Aorta (tissue), 5 donors: ENCODE measurements at regions of chr3 and their contacts with region 1.

Region 1: DNA sequence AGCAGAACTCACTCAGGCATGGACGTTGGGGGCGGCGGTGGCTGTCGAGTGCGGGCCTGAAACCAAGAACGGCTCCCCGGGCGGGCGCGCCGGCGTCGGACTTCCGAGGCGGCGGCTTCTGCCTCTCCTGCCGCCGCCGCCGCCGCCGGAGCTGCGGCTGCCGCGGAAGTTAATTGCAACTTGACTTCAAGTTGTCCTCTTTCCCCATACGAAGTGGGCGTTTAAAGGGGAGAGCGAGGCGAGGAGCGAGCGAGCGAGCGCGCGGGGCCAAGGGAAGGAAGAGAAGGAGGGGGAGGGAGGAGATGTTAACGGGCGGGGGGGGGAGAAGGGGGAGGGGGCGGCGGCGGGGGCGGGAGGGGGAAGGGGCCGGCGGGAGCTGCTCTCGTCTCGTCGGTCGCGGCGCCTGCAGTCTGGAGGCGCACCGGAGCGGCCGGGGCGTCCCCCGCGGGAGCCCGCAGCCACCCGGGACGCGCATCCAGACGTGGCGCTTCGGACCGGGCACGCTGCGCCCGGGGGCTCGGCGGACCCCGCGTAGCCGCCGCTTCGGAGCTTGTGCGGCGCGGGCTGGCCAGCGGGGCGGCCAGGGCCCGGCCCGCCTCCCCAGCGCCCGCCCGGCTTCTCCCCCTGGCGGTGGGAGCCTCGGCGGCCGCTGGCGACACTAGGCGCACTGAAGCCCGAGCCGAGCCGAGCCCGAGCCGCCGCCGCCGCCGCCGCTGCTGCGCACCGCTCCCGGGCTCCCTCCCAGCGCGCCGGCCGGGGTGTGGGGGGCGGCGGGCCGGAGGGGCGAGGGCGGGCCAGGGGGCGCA is 19.7 kb upstream of the SATB1 start:
- DNase-seq: peak; percentile 80 to 91
- ATAC-seq: peak; percentile 91
- H3K4me3 ChIP-seq: peak overlapping the region; percentile 42 to 94
- H3K27ac ChIP-seq: no peak overlapping the region
- H3K4me1 ChIP-seq: no peaks in the 10 kb centered on the region
- H3K27me3 ChIP-seq: peaks cover 0 to 1% of the 10 kb centered on the region in 2 donors

Region 2: DNA sequence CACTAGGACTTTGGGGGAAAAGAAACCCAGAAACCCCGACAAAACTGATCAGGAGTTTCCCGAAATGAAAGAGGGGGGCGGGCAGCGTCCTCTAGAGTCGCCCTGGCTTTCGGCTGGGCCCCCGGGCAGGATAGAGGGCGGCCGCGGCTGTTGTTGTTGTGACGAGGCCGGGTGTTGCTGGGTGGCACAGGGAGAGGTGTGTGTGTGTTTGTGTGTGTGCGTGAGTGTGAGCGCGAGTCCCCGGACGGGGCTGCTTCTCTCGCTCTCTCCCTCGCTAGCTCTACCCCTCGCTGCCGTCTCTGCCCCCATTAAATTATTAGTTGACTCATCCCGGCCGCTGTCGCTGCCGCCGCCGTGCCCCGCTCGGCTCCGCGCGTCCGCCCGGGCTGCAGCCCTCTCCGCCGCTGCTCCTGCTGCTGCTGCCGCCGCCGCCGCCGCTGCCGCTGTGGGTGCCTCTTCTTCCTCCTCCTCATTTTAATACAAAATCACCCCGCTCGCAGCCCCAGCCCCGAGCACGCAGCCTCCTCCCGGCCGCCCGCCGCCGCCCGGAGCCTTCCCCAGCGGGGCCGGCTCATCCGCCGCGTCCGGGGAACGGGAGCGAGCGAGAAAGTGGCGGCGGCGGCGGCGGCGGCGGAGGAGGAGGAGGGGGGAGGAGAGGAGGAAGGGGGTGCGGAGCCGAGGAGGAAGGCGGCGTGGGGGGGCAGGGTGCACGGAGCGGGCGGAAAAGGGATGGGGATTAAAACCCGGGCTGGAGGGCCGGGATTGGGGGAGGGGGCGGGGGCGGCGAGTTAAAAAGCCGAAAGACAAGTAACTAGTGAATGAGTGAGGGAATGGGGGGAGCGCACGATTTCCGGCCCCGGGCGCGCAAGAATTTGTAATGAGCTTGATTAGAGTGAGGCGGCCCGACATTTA is 19.8 kb before region 1 on chr3 and contains the start of gene SATB1:
- intact Hi-C with region 1: loop called (anchors 2 kb)
- DNase-seq: peak; percentile 90 to 96
- ATAC-seq: peak; percentile 86
- H3K4me3 ChIP-seq: peak within 1 kb of the TSS; percentile 94
- H3K27ac ChIP-seq: peak within 1 kb of the TSS in 1 of 2 donors; percentile 69
- H3K4me1 ChIP-seq: peaks cover 0 to 2% of the 10 kb centered on the region in 2 donors
- H3K27me3 ChIP-seq: no peaks in the 10 kb centered on the region
- total RNA-seq, gene SATB1: 37.2 to 41.1 TPM